Activated T-helper 1 cell treated with anti-CD3 and anti-CD28 coated beads, Interleukin-12 subunit alpha, Interleukin-12 subunit beta, Interleukin-2, Interleukin-4 antibody, amounts not matched to agents 30 ng/mL and 10 ng/mL and 1 ng/mL, durations not matched to agents 14 hours and 24 hours and 36 hours (primary cell): ENCODE measurements at regions of chr16 and their contacts with region 1.

Region 1: DNA sequence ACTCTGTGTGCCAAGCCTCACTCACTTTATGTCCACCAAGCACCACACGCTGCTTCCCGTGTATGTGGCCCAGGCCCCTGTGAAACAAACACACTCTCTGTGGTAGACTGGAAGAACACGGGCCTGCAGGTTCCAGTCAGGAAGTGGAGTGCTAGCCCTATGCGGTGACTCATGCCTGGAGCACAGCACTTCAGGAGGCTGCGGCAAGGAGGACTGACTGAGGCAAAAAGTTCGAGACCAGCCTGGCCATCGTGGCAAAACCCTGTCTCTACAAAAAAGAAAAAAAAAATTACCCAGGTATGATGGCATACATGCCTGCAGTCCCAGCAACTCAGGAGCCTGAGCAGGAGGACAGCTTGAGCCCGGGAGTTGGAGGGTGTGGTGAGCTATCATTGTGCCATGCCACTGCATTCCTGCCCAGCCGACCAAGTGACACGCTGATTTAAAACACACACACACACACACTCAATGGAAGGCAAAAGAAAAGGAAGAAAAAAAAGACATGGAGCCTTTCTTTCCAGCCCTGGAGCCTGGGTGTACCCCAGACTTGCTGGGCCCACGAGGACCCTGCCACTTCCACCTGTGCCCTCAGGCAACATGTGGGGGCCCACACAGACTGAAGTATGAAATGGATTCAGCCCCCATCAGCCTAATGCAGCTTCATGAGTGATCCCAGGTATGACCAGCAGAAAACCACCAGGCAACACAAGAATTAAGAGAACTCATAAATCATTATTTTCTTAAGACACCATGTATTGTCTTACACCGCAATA is 126.6 kb downstream of the ANKRD11 start:
- DNase-seq: peak; percentile 42
- H3K4me3 Mint-ChIP-seq: peak overlapping the region; percentile 63
- H3K27ac Mint-ChIP-seq: peak overlapping the region; percentile 81
- H3K4me1 Mint-ChIP-seq: peaks cover 97% of the 10 kb centered on the region
- H3K27me3 Mint-ChIP-seq: no peaks in the 10 kb centered on the region

Region 2: DNA sequence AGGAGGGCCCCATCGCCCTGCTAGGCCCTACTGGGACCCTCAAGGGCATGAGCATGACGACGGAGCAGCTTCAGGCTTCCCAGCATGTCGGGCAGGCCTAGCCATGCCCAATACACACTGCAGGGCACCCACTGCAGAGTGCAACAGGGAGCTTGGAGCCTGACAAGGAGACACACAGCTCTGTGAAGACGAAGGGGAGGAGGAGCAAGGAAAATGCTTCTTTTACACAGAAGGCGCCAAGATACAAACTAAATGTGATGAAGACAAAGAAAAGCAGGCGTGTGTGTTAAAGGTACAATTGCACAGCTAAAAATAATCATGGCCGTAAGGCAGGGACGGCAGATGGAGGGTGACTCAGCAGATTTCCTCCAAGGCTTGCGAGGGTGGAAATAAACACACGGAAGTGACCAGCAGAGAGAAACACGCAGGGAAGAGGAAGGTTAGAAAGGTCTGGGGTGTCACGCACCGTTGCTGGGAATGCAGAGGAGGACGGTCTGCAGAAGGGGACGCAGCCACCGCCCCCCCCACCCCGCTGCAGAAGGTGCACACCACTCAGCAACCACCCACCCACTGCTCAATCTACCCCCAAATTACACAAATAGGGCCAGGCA is 37.8 kb before region 1 on chr16:
- intact Hi-C with region 1: loop called (anchors 2 kb)
- DNase-seq: no peak
- H3K4me3 Mint-ChIP-seq: peak overlapping the region; percentile 62
- H3K27ac Mint-ChIP-seq: peak overlapping the region; percentile 73
- H3K4me1 Mint-ChIP-seq: peaks cover 71% of the 10 kb centered on the region
- H3K27me3 Mint-ChIP-seq: no peaks in the 10 kb centered on the region

Region 3: GRCh38 chr16:89345642-89346150 is 18.1 kb before region 1 on chr16:
- intact Hi-C with region 1: loop called (anchors 1 kb)
- DNase-seq: no peak
- H3K4me3 Mint-ChIP-seq: no peak overlapping the region
- H3K27ac Mint-ChIP-seq: peak overlapping the region; percentile 77
- H3K4me1 Mint-ChIP-seq: peaks cover 62% of the 10 kb centered on the region
- H3K27me3 Mint-ChIP-seq: no peaks in the 10 kb centered on the region

Region 4: DNA sequence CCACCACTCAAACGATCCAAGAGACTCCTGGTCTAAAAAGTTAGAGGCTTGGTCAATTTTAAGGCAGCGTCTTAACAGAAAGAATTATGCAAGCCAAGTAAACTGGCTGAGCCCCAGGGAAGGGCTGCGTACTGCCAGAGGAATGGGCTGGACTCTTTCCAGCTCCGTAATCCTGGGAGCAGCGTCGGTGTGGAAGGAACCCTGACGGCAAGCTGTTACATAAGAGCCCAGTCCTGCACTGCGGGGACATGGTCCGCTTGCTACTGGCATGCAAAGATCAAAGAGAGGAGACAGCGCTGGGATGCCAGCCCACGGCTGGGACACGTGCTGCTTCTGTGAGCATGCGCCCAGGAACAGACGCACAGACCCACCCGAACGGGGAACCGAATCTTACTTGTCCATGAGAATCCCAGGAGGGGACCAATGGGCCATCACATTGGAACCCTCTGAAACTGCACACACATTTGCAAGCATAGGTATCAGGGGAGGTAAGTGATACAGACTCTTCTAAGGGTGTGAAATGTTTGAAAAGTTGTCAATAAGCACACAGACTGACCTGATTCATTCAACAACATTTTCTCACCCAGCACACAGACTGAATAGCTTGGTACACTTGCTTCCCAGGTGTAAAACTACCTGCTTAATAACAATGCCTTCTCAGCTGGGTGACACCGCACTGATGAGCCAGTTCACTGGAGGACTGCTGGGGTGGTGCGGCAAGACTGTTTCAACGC is 31.5 kb after region 1 on chr16:
- intact Hi-C with region 1: no loop called
- DNase-seq: no peak
- H3K4me3 Mint-ChIP-seq: no peak overlapping the region
- H3K27ac Mint-ChIP-seq: peak overlapping the region; percentile 4
- H3K4me1 Mint-ChIP-seq: peaks cover 20% of the 10 kb centered on the region
- H3K27me3 Mint-ChIP-seq: no peaks in the 10 kb centered on the region

Region 5: DNA sequence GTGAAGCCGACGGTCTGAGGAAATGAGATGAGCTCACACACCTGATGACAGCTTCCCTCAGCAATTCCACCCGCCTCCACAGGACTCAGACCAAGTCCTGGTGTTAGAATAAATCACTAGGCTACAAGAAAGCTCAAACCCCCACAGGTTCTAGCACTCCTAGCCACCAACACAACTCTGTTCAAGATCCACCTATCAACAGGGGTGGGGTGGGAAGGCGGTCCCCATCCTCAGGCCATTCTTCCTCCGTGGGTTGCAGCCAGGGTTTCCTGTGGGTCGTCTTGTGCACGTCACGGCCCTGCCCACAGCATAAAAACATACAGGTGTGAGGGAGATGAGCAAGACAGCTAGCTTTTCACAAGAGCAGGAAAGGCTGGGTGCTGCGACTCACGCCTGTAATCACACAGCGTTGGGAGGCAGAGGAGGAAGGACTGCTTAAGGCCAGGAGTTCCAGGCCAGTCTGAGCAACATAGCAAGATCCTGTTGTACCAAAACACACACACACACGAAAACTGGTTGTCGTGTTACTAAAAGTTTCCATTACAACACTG is 45.4 kb after region 1 on chr16:
- intact Hi-C with region 1: loop called (anchors 1 kb)
- DNase-seq: peak; percentile 60
- H3K4me3 Mint-ChIP-seq: peak overlapping the region; percentile 58
- H3K27ac Mint-ChIP-seq: peak overlapping the region; percentile 94
- H3K4me1 Mint-ChIP-seq: peaks cover 72% of the 10 kb centered on the region
- H3K27me3 Mint-ChIP-seq: no peaks in the 10 kb centered on the region

Region 6: DNA sequence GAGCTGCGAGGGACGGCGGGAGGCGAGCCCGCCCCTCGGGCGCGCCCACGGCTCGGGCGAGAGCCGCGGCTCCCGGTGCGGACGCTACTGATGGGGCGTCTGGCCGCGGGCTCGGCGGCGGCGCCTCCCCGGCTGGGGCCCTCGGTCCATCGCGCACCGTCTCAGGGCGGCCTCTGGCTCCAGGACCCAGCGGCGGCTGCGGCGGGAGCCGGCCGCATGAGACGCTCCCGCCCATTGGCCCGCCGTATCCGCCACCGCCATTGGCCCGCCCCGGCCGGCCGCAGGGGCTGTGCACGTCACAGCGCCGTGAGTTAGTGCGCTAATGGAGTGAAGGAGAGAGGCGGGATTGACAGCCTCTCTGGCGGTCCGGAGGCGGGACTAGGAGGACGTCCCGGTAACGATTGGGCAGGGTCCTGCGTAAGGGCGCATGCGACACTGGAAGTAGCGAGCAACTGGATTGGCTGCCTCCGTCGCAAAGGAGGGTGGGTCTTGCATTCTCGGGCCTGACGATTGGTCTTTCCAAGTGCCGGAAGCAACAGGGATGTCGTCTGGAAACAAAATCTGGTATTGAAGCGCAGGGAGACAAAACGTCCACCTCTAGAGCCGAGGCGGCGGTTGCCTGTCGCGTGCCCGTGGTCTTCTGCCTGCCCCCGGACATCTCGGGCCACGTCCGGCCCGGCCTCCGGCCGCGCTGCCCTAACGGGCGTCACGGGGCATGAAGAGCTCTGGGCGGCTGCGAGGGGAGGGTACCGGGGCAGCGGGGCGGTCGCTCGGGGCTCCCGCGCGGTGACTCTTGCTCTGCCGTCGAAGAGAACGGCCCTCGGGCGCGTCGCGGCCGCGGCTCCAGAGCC is 126.8 kb after region 1 on chr16 and contains the start of gene ANKRD11:
- intact Hi-C with region 1: loop called (anchors 1 kb)
- DNase-seq: peak; percentile 99
- H3K4me3 Mint-ChIP-seq: peak within 1 kb of the TSS; percentile 96
- H3K27ac Mint-ChIP-seq: peak within 1 kb of the TSS; percentile 99
- H3K4me1 Mint-ChIP-seq: peaks cover 52% of the 10 kb centered on the region
- H3K27me3 Mint-ChIP-seq: no peaks in the 10 kb centered on the region
- total RNA-seq, gene ANKRD11: 176 and 179 TPM in 2 replicates